Posterior vena cava (tissue), 2 donors: ENCODE measurements at regions of chr7 and their contacts with region 1.

Region 1: DNA sequence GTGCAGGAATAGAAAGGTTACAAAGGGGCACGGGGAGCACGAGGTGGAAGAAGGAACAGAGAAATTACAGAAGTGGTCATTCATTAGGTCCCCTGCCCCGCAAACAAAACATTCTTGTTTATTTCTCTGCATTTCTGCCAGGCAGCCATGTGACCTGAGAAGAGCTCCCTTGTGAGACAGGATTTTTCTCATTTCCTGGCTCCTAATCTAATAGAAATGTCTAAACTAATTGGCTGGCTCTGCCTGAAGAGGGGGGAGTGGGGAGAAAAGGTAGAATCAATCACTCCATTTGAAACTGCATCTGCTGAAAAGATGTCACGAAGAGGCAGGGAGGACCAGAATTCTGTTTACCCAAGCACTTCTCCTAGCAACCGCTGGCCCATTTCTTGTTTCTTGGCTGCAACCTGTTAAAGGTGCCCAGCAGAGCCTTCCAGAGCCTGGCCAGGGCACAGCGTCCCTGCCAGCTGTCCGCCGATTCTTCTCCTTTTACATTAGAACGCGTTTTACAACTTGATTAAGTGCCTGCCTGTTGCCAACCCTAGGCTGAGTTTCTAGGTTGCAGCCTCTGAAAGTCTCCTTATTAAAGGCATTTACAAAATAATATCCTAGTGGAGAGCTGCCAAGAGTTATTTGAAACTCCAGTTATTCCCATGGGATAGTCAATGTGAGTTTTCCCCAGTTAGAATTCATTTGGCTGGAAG is 1227.6 kb downstream of the TYW1 start:
- DNase-seq: no peak

Region 2: GRCh38 chr7:68276725-68277124 is 52.5 kb after region 1 on chr7:
- intact Hi-C with region 1: no loop called
- DNase-seq: no peak

Region 3: DNA sequence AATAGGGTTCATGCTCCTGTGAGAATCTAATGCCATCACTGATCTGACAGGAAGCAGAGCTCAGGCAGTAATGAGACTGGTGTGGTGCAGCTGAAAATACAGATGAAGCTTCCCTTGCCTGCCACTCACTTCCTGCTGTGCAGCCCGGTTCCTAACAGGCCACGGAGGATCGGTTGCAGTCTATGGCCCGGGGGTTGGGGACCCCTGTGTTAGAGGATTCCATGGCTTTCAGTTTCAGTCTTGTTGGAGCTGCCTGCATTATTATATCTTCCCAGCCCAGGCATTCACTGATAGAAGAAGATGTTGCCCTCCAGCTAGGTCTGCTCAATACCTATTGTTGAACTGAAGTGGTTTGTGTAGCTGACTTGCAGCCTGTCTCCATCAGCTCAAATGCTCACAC is 71.2 kb after region 1 on chr7:
- intact Hi-C with region 1: loop called in 1 of 2 experiments (anchors 2 kb)
- DNase-seq: no peak